Right ventricle myocardium superior (tissue), 1 donor: ENCODE measurements at regions of chr10 and their contacts with region 1.

Region 1: GRCh38 chr10:34637418-34637911 is 177.6 kb downstream of the PARD3 start:
- DNase-seq: peak; percentile 79
- ATAC-seq: peak; percentile 78

Region 2: GRCh38 chr10:34528320-34528719 is 109.1 kb before region 1 on chr10:
- intact Hi-C with region 1: loop called (anchors 5 kb)
- DNase-seq: no peak
- ATAC-seq: no peak